A673 (cell line): ENCODE measurements at regions of chr6 and their contacts with region 1.

Region 1: DNA sequence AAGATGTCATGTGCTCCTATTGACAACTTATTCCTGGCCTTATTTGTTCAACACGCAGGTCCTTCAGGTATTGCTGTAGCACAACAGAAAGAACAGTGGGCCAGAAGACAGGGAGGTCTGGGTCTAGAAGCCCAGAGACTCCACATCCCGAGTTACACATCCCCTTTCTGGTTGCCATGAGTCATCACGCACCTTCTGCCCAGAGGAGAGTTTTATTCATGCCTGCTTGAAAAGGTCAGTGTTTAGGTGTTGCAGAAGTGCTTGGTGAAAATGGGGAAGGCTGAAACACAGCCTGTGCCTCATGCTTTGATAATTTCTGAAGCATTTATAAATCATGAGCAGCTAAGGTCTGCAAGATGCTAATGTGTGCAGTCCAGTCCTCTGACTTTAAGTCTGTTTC is 256.4 kb downstream of the GMPR start:
- DNase-seq: no peak
- H3K4me3 ChIP-seq: no peak overlapping the region
- H3K27ac ChIP-seq: no peak overlapping the region
- H3K4me1 ChIP-seq: peaks cover 10% of the 10 kb centered on the region
- H3K27me3 ChIP-seq: no peaks in the 10 kb centered on the region
- CTCF ChIP-seq: no peak

Region 2: DNA sequence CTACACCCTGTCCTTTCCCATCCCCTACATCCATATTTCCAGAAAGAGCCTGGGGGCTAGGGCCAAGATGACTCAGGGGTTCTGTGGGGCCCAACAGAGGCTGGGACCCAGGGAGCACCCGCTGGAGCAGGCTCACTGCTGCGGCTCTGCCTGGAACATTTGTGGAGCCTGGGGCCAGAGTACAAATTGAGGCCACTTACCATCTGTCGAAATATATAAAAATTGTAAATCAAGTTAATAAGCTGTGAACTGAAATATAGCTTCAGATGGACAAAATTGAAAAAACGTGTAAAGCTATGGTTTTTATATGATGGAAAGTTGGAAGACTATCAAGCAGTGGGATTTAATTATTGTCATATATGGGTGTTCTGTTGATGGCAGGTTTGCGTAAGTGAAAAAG is 349.4 kb after region 1 on chr6:
- CTCF ChIA-PET with region 1: interaction called, 11 read pairs
- POLR2A ChIA-PET with region 1: no interaction called
- intact Hi-C with region 1: no loop called
- DNase-seq: no peak
- H3K4me3 ChIP-seq: no peak overlapping the region
- H3K27ac ChIP-seq: no peak overlapping the region
- H3K4me1 ChIP-seq: peaks cover 26% of the 10 kb centered on the region
- H3K27me3 ChIP-seq: no peaks in the 10 kb centered on the region
- CTCF ChIP-seq: no peak